ENCODE measurements at regions of chrX and their contacts with region 1.

Region 1: GRCh38 chrX:39688576-39689375 is 409.0 kb downstream of the BCOR start:
- DNase-seq: peak; percentile 35 to 94 (median 49)

Region 2: GRCh38 chrX:39652336-39653131 is 36.2 kb before region 1 on chrX:
- intact Hi-C with region 1: loop called (anchors 1 kb)
- DNase-seq: peak in 2 of 10 donors; percentile 33 to 41

Region 3: DNA sequence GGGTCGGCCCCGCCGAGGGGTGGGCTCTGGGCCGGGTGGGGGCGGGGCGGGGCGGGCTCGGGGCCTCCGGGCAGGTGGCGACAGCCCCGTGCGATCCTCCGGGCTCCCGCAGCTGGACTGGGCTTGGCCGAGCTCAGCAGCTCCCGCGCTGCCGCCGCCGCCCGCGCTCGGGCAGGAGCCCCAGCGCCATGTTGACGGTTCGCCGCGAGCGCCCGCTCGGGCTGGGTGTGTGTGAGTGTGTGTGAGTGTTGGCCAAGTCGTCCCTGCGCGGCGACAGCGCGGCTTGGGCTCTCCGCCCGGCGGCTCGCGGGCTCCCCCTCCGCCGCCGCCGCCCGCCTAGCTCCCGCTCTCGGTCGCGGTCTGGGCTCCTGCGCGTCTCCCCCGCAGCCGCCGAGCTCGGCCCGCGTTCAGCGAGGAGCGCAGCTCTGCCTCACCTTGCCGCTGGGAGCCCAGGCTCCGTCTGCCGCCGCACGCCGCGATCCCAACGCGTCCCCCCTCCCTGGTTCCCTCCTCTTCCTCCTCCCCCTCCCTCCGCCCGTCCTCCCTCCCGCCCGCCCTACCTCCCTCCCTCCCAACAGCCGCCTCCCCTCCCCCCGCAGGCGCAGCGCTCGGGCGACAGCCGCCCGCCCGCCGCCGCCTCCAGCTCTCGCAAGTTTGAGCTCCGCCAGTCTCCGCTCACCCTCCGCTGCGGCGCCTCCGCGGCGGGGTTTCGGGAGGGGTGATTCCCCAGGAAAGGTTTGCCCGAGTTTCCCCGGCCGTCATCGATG is 408.9 kb after region 1 on chrX and contains the start of gene BCOR:
- intact Hi-C with region 1: loop called (anchors 5 kb)
- DNase-seq: peak in 5 of 10 donors; percentile 55 to 95 (median 88)

Measured in posterior cingulate gyrus (tissue), 11 donors.